Activated CD4-positive, alpha-beta memory T cell treated with anti-CD3 and anti-CD28 coated beads for 36 hours (primary cell): ENCODE measurements at regions of chr7 and their contacts with region 1.

Region 1: GRCh38 chr7:14691597-14692203 is 210.9 kb downstream of the DGKB start:
- DNase-seq: peak; percentile 53
- H3K4me3 Mint-ChIP-seq: no peak overlapping the region
- H3K27ac Mint-ChIP-seq: no peak overlapping the region
- H3K4me1 Mint-ChIP-seq: no peaks in the 10 kb centered on the region
- H3K27me3 Mint-ChIP-seq: peaks cover 8% of the 10 kb centered on the region

Region 2: DNA sequence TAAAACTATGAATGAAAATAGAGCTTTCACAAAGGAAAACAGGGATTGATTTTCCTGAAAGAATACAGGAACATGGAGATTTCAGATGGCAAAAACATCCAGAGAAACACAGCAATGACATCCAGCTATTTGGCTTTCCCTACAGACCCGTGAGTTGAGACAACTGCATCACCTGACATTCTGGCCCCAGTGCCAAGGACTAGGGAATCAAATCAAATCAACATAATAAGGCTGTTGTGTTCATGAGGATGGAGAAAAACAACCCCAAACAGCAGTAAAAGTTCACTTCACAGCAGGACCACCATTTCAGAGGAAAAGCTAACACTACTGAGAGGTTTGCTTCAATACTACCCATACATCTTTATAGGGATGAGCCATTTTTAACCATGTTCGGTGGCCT is 727.8 kb before region 1 on chr7:
- CTCF ChIA-PET with region 1: no interaction called
- POLR2A ChIA-PET with region 1: no interaction called
- intact Hi-C with region 1: no loop called
- DNase-seq: no peak
- H3K4me3 Mint-ChIP-seq: no peak overlapping the region
- H3K27ac Mint-ChIP-seq: no peak overlapping the region
- H3K4me1 Mint-ChIP-seq: no peaks in the 10 kb centered on the region
- H3K27me3 Mint-ChIP-seq: no peaks in the 10 kb centered on the region

Region 3: DNA sequence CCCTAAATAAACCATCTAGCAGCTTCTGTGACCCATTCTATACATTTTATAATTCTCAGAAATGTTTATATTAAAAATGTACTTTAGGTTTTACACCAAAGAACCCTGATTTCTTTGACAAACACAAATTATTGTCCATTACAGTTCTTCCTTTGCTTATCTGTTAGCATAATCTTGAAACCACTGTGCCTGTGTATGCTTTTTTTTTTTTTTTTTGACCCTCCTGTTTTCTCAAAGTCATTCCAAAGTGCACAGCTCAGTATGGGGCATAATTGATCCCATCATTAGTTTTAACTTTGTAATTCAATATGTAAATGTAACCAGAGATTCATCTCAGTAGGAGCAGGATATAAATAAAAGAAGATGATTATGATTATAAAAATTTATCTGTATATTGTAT is 18.5 kb before region 1 on chr7:
- CTCF ChIA-PET with region 1: interaction called, 11 read pairs
- POLR2A ChIA-PET with region 1: no interaction called
- intact Hi-C with region 1: no loop called
- DNase-seq: no peak
- H3K4me3 Mint-ChIP-seq: no peak overlapping the region
- H3K27ac Mint-ChIP-seq: no peak overlapping the region
- H3K4me1 Mint-ChIP-seq: no peaks in the 10 kb centered on the region
- H3K27me3 Mint-ChIP-seq: peaks cover 1% of the 10 kb centered on the region

Region 4: GRCh38 chr7:14717816-14718215 is 26.1 kb after region 1 on chr7:
- CTCF ChIA-PET with region 1: interaction called, 15 read pairs
- POLR2A ChIA-PET with region 1: no interaction called
- intact Hi-C with region 1: no loop called
- DNase-seq: no peak
- H3K4me3 Mint-ChIP-seq: no peak overlapping the region
- H3K27ac Mint-ChIP-seq: no peak overlapping the region
- H3K4me1 Mint-ChIP-seq: peaks cover 9% of the 10 kb centered on the region
- H3K27me3 Mint-ChIP-seq: no peaks in the 10 kb centered on the region